Gastrocnemius medialis (tissue), 4 donors: ENCODE measurements at regions of chr1 and their contacts with region 1.

Region 1: DNA sequence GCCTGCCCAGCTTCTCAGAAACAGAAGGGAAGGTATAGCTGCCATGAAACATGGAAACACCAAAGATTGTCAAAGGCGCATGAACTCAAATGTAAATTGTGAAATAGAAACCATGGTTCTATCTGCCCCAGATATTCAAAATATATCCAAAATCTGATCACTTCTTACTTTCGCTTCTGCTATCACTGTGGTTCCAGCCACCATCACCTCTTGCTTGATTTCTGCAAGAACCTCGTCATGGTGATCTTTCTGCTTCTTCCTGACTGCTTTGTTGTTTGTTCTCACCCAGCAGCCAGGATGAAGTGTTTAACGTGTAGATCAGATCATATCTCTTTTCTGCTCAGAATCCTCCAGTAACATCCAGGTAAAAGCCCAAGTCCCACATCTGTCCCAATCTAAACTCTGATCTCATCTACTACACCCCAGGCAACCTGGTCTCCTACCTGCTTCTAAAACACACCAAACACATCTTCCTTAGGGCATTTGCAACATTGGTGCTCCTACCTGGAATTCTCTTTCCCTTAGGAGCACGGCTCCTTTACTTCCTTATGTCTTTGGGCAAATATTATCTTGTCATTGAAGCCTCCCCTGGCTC is 10.5 kb upstream of the LMO4 start:
- DNase-seq: no peak
- ATAC-seq: no peak
- H3K4me3 ChIP-seq: no peak overlapping the region
- H3K27ac ChIP-seq: no peak overlapping the region
- H3K4me1 ChIP-seq: no peaks in the 10 kb centered on the region
- H3K27me3 ChIP-seq: no peaks in the 10 kb centered on the region
- CTCF ChIP-seq: no peak
- POLR2A ChIP-seq: no peak

Region 2: DNA sequence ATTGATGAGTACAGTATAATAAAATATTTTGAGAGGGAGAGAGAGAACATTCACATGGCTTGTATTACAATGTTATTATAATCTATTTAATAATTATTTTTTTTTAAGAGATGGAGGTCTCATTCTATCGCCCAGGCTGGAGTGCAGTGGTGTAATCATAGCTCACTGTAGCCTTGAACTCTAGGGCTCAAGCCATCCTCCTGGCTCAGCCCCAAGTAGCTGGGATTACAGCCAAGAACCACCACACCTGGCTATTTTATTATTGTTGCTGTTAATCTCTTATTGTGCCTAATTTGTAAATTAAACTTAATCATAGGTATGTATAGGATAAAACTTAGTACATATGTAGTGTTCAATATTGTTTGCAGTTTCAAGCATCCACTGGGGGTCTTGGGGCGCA is 345.9 kb before region 1 on chr1:
- in situ Hi-C with region 1: no loop called
- intact Hi-C with region 1: loop called (anchors 10 kb)
- DNase-seq: no peak
- ATAC-seq: no peak
- H3K4me3 ChIP-seq: no peak overlapping the region
- H3K27ac ChIP-seq: no peak overlapping the region
- H3K4me1 ChIP-seq: peaks cover 9 to 12% of the 10 kb centered on the region in 2 donors
- H3K27me3 ChIP-seq: no peaks in the 10 kb centered on the region
- CTCF ChIP-seq: no peak
- POLR2A ChIP-seq: no peak